Naive thymus-derived CD4-positive, alpha-beta T cell (primary cell): ENCODE measurements at regions of chrX and their contacts with region 1.

Region 1: DNA sequence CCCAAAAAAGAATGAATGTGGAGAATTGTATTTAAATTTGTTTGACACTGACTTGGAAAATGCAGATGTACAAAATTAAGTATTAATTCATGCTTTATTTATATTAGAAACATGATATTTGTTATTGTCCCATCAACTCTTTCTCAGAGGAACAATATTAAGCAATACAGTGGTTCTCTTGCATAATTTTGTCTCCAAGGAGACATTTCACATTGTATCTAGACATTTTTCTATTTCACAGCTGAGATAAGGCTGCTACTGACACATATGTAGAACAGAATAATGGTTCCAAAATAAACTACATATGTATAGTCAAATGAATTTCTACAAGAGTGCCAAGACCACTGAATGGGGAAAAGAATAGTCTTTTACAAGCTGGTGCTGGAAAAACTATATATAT is 427.9 kb upstream of the SPANXN1 start:
- DNase-seq: no peak
- ATAC-seq: no peak
- H3K4me3 ChIP-seq: no peak overlapping the region
- H3K4me3 Mint-ChIP-seq: no peak overlapping the region
- H3K27ac ChIP-seq: no peak overlapping the region
- H3K27ac Mint-ChIP-seq: no peak overlapping the region
- H3K4me1 ChIP-seq: no peaks in the 10 kb centered on the region
- H3K4me1 Mint-ChIP-seq: no peaks in the 10 kb centered on the region
- H3K27me3 ChIP-seq: no peaks in the 10 kb centered on the region
- H3K27me3 Mint-ChIP-seq: no peaks in the 10 kb centered on the region

Region 2: DNA sequence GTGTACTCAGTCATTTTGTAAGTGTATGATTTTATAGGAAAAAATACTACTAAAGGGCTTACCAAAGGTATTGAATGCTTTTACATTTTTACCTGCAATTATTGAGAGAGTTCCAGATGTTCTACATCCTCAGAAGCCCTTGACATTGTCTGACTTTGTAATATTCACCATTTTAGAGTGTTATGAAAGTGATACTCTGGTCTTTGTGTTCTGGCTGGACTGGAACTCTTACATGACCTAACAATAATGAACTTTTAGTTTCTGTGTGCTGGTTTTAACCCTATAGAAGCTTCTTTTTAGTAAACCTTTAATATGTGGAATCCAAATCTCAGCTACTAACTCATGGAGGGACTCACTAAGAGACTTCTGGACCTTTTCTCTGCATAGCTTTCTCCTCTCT is 50.9 kb before region 1 on chrX:
- CTCF ChIA-PET with region 1: no interaction called
- POLR2A ChIA-PET with region 1: no interaction called
- intact Hi-C with region 1: loop called in 1 of 2 experiments (anchors 2 kb)
- DNase-seq: no peak
- ATAC-seq: no peak
- H3K4me3 ChIP-seq: no peak overlapping the region
- H3K4me3 Mint-ChIP-seq: no peak overlapping the region
- H3K27ac ChIP-seq: no peak overlapping the region
- H3K27ac Mint-ChIP-seq: no peak overlapping the region
- H3K4me1 ChIP-seq: no peaks in the 10 kb centered on the region
- H3K4me1 Mint-ChIP-seq: no peaks in the 10 kb centered on the region
- H3K27me3 ChIP-seq: no peaks in the 10 kb centered on the region
- H3K27me3 Mint-ChIP-seq: no peaks in the 10 kb centered on the region

Region 3: DNA sequence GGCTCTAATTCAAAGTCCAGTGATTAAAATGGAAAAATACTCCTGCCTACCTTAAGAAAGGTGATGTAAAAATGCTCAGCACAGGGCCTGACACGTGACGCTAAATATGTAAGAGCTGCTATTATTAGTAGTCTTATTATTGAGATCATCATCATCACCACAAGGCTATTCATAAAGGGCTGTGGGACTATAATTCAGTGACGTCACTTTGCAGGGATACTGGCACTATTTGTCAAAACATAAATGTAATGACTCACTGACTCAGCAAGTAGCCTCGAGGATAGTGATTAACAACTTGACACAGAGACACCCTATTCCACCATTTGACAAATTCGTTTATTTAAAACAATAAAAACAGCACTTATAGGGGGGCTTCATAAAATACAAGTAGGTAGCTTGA is 686.8 kb after region 1 on chrX:
- CTCF ChIA-PET with region 1: no interaction called
- POLR2A ChIA-PET with region 1: no interaction called
- intact Hi-C with region 1: no loop called
- DNase-seq: no peak
- ATAC-seq: no peak
- H3K4me3 ChIP-seq: no peak overlapping the region
- H3K4me3 Mint-ChIP-seq: no peak overlapping the region
- H3K27ac ChIP-seq: no peak overlapping the region
- H3K27ac Mint-ChIP-seq: no peak overlapping the region
- H3K4me1 ChIP-seq: no peaks in the 10 kb centered on the region
- H3K4me1 Mint-ChIP-seq: no peaks in the 10 kb centered on the region
- H3K27me3 ChIP-seq: no peaks in the 10 kb centered on the region
- H3K27me3 Mint-ChIP-seq: no peaks in the 10 kb centered on the region